ENCODE measurements at regions of chr9 and their contacts with region 1.

Region 1: GRCh38 chr9:92140074-92140753 is 25.0 kb upstream of the SPTLC1 start:
- DNase-seq: peak; percentile 82
- CTCF ChIP-seq: peak; percentile 98

Region 2: DNA sequence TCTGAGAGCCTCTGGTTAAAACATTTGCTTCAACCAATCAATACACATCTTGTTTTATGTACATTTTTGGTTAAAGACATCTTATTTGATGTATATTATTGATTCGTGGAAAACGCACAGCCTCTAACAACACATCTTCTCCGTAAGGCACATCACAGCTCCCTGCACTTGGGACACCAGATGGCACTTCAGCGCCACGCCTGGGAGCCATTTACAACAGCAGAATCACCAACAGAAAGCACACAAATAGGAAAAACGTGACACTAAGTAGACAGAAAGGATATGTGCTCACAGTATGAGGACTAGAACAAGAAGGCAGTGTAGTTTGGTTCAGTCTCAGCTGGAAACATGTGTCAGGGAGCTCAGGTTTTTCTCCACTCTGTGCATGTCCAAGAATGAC is 389.9 kb before region 1 on chr9:
- CTCF ChIA-PET with region 1: no interaction called
- POLR2A ChIA-PET with region 1: no interaction called
- DNase-seq: no peak
- CTCF ChIP-seq: no peak

Region 3: DNA sequence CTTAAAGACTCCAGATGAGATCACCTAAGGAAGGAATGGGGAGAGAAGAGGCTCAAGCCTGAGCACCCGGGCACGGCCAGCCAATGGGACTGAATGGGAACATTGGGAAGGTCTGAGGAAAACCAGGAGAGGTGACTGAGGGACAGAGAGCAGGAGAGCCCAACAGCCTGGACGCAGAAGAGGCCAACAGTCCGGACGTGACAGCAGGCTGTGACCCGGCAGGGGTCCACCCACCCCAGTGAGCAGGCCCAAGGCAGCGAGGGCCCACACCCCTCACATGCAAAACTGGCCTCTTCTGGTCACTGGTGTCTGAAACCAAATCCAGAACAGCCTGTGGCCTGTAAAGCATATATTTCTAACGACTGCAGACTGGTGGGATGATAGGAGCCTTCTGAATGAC is 17.4 kb before region 1 on chr9:
- CTCF ChIA-PET with region 1: interaction called, 37 read pairs
- POLR2A ChIA-PET with region 1: no interaction called
- DNase-seq: no peak
- CTCF ChIP-seq: no peak

Region 4: DNA sequence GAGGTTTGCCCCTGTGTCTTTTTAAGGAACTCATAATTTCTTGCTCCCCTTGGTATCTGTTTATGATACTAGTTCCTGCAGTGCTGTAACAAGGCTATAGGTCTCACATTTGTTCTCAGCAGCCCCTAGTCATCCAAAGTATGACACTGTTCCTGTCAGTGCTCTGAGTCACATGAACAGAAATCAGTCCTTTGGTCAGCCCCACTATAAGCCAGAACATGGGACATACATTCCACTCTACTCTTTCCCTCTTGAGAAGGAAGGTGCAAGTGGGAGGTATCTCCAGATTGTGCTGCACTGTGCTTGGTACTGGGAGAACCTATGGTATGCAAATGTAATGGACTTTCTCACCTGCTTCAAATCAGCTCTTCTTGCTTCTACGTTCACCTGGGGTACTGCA is 66.3 kb after region 1 on chr9:
- CTCF ChIA-PET with region 1: interaction called, 29 read pairs
- POLR2A ChIA-PET with region 1: no interaction called
- DNase-seq: no peak
- CTCF ChIP-seq: no peak

Region 5: DNA sequence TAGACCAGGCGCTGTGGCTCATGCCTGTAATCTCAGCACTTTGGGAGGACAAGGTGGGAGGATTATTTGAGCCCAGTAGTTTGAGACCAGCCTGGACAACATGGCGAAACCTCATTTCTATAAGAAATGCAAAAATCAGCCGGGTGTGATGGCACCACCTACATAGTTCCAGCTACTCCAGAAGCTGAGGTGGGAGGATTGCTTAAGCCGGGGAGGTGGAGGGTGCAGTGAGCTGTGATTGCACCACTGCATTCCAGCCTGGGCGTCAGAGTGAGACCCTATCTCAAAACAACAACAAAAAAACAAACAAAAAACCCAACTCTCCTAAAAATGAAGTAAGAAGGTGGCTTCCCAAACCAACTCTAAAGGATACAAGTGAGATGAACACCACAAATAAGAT is 130.3 kb after region 1 on chr9:
- CTCF ChIA-PET with region 1: interaction called, 12 read pairs
- POLR2A ChIA-PET with region 1: no interaction called
- DNase-seq: no peak
- CTCF ChIP-seq: no peak

Region 6: GRCh38 chr9:92438900-92439526 is 298.8 kb after region 1 on chr9:
- CTCF ChIA-PET with region 1: interaction called, 33 read pairs
- POLR2A ChIA-PET with region 1: no interaction called
- DNase-seq: no peak
- CTCF ChIP-seq: no peak